Cardiac septum (tissue), 1 donor: ENCODE measurements at regions of chr3 and their contacts with region 1.

Region 1: DNA sequence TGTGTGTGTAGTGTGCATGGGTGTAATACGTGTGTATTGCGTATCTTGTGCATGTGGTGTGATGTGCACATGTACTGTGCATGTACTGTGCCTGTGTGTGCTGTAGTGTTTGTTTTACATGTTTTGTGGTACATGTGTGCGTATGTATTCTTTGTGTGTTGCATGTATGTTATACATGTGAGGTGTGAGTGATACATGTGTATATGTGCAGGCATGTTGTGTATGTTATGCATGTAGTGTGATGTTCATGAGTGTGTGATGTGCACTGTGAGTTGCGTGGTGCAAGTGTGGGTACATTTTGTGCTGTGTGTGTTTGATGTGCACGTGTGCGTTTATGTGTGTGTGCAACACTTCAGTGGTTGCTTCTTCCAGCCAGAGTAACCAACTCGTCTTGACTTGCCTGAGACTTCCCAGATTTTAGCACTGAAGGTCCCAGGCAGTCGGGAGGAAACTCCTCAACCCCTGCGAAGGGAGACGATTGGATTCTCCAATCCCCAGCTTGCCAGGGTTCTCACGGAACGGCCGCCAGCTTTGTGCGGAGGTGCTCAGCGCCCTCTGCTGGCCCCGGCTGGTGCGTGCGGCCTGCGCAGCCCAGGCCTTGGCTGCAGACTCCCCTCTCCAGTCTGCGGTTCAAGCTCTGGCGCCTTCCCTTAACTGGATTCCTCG is 3.6 kb downstream of the GALNT15 start:
- DNase-seq: peak; percentile 88

Region 2: DNA sequence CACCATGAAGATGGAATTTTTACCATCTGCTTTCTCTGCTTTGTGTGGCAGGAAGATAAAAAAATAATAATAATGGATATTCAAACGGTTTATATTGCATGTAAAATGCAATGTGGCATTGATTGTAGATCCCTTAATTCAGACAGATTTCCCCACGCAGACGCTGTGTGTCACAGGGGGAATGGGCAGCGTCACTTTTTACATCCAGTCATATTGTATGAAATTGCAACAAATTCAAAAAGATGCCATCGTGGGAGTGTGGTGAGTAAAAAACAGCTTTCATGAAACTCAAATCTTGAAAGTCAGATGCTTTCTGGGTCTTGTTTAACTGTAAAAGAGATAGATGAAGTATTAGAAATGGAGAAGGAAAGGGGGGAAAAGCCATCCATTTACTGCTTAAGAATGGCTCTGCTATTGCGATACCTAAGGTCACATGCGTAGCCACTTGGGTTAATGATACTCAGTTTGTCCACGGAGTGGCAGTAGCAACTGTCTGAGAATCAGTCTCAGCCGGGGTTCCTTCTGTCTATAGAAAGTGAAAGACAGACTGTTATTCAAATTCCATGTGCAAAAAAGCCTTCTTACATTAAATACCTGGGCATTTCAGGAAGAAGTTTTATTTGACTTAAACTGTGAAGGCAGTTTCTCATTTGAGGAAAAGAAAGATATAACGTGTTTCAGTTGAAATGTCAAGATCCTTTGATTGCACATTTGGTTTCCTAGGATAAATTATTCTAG is 548.1 kb before region 1 on chr3:
- intact Hi-C with region 1: loop called (anchors 10 kb)
- DNase-seq: no peak

Region 3: DNA sequence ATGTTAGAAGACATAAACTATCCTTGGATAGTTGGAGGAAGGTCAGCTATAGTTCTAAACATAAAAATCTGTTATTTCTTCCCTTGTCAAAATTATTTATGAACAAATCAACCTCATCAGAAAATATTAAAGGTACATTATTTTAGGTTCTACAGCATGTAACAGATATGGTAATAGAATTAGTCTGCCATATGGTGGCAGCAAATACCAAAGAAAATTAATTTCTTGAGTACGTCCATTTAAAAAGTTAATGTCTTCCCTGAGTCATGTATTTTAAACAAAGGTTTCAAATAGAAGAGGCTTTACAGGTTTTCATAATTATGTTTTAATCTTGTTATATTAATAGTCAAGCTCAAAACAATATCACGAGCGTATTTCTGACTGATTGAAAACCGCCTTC is 362.4 kb before region 1 on chr3:
- intact Hi-C with region 1: loop called (anchors 5 kb)
- DNase-seq: no peak

Region 4: DNA sequence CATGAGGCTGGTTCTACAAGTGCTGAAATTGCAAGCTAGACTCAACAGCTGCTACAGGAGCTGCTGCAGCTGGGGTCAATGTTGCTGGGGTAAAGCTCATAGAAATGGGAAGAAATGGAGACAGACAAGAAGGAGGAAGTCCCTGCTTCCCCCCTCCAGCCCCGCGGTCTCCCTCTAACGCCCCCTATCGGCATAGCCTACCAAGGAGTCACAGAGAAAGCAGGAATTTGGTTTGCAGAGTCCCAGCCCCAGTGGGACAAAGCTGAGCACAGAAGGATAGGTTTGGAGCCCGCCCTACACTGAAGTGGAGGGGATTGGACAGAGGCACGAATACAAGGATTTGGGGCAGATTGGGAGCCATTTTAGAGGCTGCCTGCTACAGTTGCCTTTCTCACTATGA is 203.4 kb before region 1 on chr3:
- intact Hi-C with region 1: no loop called
- DNase-seq: no peak

Region 5: DNA sequence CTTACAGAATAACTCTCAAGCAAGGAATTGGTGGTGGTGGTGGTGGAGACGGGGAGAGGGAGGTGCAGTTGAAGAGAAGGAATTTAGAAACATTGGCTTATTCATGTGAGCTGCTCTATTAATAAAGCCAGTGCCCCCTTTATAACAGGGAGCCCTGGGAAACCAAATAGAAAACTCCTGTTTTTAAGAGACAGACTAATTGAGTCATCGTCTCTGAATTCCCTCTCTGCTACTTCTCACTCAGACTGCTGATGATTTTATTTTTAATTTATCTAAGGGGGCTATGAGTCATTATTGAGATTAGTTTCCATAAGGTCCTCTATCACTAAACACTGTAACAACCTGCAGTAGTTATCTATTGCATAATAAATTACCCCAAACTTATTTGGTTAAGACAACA is 149.5 kb before region 1 on chr3:
- intact Hi-C with region 1: no loop called
- DNase-seq: no peak

Region 6: DNA sequence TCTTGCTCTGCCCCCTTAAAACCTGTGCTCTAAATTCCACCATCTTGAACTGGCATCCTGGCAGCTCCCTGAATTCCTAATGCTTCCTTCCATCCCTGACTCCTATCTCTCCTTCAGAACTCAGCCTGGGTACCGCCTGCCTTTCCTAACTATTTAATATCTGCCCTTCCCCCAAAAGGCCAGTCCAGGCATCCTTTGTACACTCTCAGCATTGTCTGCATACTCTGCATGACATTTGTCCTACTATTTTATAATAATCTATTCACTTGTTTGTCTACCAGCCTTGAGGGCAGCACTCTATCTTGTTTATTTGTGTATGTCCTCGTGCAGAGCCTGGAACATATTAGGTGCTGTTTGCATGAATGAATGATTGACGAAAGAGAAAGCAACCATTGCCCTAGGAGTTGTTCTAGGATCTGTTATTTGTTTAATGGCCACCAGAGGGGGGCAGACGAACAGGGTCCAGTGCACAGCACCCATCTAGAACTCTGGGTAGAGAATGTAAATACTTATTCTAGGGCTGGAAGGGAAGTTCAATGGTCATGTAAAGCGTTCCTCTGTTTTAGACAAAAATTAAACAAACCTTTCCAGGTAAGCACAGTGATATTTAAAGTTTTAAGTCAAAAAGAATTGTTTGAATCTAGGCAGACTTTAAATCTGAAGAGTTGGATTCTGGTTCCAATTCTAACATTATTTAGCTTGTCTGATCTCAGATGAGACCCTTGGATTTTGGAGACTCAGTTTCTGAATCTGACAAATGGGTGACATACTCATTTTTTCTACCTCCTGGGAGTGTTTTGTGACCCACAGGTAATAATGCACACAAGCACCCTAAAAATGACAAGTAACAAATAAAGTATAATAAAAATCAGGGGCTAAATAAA is 129.4 kb before region 1 on chr3:
- intact Hi-C with region 1: loop called (anchors 1 kb)
- DNase-seq: no peak

Region 7: DNA sequence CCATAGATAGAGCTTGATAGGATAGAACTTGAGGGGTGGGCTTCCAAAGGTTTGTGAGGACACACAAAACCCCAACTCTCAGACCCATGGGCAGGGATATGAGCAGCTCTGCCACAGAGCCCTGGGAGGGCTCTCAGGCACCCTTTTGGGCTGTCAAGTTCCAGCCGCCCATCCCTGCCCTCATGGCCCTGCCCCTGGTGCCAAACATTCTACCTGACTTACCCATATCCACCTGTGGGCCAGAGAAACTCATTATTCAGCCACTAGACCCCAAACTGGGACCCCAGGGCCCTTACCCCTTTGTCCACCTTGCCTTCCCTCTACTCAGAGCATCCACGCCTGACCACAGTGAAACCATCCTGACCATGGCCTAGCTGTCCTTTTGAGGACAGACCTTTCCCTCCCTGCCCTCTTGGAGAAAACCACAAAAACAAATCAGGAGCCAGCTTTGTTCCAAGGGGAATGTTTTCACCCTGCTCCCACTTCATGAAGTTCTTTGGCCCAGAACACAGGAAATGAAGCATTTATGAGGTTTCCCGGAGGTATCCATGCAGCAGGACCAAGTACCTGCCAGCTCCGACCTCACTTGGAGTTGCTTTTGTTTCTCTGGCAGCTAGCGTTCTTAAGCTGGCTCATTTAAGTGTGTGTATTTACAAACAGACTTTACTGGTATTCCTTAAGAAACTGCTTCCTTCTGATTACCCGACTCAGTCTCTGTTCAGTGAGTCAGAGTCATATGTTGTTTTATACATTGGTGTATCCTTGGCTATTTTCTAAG is 37.8 kb before region 1 on chr3:
- intact Hi-C with region 1: loop called (anchors 5 kb)
- DNase-seq: no peak

Region 8: DNA sequence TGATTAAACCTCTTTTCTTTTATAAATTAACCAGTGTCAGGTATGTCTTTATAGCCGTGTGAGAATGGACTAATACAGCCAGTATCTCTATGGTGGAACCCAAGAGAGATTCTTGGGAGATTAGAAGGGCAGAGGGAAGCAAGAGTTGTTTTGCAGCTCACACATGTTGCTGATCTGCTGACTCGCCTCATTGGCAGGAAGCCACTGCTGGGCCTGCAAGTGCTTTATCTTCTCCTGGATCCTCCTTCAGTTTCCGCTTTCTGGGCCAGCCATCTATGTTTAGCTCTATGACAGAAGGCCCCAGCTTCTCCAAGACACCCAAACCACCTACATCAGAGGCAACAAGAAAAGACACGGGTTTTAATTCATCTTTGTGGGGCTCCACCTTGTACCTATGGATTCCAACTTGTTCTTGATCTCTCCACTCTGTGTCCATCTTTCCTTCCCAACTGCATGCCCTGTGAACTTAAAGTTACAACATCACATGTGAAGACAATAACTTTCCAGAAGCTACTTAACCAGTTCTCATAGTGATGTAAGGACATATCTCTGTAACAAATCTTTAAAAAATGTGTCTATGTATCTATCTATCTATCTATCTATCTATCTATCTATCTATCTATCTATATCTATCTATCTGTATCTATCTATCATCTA is 26.9 kb before region 1 on chr3:
- intact Hi-C with region 1: loop called (anchors 2 kb)
- DNase-seq: peak; percentile 86

Region 9: GRCh38 chr3:16247276-16248061 is 69.4 kb after region 1 on chr3:
- intact Hi-C with region 1: loop called (anchors 1 kb)
- DNase-seq: no peak

Region 10: DNA sequence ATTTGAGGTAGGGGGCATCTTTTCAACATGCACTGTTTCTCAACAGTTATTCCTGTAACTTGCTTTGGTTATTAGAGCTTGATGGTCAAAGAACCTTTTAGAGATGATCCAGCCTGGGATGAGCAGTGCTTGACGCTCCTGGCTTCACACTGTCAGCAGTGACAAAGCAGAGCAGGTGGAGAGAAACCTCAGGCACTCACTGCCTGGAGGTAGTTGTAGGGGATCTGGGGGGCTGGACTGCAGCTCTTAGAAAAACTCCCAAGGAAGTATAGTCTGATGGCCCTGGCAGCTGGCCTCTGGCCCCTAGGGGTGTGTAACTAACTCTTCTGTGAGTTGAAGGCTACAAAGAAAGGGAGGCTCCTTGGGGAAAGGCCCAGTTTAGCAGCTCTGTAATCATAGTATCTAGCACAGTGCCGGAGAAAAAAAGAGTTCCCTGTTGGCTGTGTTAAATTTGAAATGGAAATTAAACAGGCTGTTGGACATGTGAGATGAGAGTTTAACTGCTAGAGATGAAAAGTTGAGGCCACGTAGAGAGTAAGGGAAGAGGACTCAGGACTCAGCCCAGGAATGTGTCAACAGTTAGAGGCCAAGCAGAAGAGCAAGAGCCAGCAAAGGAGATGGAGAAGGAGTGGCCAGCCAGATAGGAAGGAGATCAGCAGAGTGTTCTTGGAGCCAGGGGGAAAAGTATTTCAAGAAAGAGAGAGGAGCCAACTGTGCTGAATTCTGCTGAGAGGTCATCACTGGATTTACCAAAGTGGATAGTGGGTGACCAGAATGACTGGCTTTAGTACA is 101.1 kb after region 1 on chr3:
- intact Hi-C with region 1: no loop called
- DNase-seq: no peak